K562 (cell line): ENCODE measurements at regions of chr6 and their contacts with region 1.

Region 1: DNA sequence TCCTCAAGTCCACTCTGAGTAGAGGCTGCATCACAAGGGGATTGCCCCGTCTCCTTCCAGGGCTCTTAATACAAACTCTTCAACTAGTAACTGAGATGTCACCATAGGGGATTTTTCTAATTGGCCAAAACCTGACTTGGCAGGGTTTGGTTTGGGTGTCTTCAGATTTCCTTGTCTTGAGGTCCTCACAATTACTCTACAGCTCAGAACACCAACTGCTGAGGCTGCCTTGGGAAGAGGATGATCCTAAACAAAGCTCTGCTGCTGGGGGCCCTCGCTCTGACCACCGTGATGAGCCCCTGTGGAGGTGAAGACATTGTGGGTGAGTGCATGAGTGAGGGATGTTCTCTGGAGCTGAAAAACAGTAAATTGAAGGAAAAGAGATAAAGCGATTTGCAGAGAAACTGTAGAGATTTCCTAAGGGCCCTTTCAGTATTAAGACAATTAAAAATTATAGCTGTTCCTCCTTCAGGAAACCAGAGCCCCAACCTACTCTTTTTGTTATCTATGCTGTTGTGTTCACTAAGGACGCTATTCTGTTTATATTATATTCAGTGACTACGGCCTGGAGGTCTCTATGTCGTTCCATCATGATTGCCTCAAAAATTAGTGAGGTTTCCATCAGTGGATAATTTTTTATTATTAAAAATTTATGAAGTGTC is at the start of gene HLA-DQA1:
- DNase-seq: no peak
- ATAC-seq: no peak
- H3K4me3 ChIP-seq: no peak within 1 kb of the TSS
- H3K27ac ChIP-seq: no peak within 1 kb of the TSS
- H3K4me1 ChIP-seq: no peaks in the 10 kb centered on the region
- H3K27me3 ChIP-seq: no peaks in the 10 kb centered on the region
- CTCF ChIP-seq: no peak
- EP300 ChIP-seq: no peak
- POLR2A ChIP-seq: no peak
- RAD21 ChIP-seq: no peak
- polyA plus RNA-seq, gene HLA-DQA1: not detected

Region 2: GRCh38 chr6:32741031-32741960 is 103.9 kb after region 1 on chr6 and contains the start of gene HLA-DQA2:
- CTCF ChIA-PET with region 1: no interaction called
- POLR2A ChIA-PET with region 1: no interaction called
- in situ Hi-C with region 1: loop called (anchors 5 kb)
- intact Hi-C with region 1: no loop called
- DNase-seq: no peak
- ATAC-seq: no peak
- H3K4me3 ChIP-seq: no peak within 1 kb of the TSS
- H3K27ac ChIP-seq: no peak within 1 kb of the TSS
- H3K4me1 ChIP-seq: no peaks in the 10 kb centered on the region
- H3K27me3 ChIP-seq: peaks cover 13 to 19% of the 10 kb centered on the region in 2 experiments; a peak in 4 of 5 replicates
- CTCF ChIP-seq: no peak
- EP300 ChIP-seq: no peak
- POLR2A ChIP-seq: no peak
- RAD21 ChIP-seq: no peak
- polyA plus RNA-seq, gene HLA-DQA2: not detected